Activated CD8-positive, alpha-beta T cell treated with anti-CD3 and anti-CD28 coated beads for 36 hours (primary cell): ENCODE measurements at regions of chr10 and their contacts with region 1.

Region 1: GRCh38 chr10:87771871-87772500 is 46.0 kb downstream of the ATAD1 start:
- DNase-seq: no peak
- ATAC-seq: no peak
- H3K4me3 Mint-ChIP-seq: no peak overlapping the region
- H3K27ac Mint-ChIP-seq: no peak overlapping the region
- H3K4me1 Mint-ChIP-seq: peaks cover 2% of the 10 kb centered on the region
- H3K27me3 Mint-ChIP-seq: no peaks in the 10 kb centered on the region
- CTCF ChIP-seq: peak; percentile 68

Region 2: GRCh38 chr10:87761892-87762291 is 10.1 kb before region 1 on chr10:
- CTCF ChIA-PET with region 1: interaction called, 11 read pairs
- POLR2A ChIA-PET with region 1: interaction called, 3 read pairs
- intact Hi-C with region 1: no loop called
- DNase-seq: peak; percentile 82
- ATAC-seq: peak; percentile 97
- H3K4me3 Mint-ChIP-seq: no peak overlapping the region
- H3K27ac Mint-ChIP-seq: peak overlapping the region; percentile 80
- H3K4me1 Mint-ChIP-seq: peaks cover 28% of the 10 kb centered on the region
- H3K27me3 Mint-ChIP-seq: no peaks in the 10 kb centered on the region
- CTCF ChIP-seq: no peak